Transverse colon (tissue), 4 donors: ENCODE measurements at regions of chr20 and their contacts with region 1.

Region 1: DNA sequence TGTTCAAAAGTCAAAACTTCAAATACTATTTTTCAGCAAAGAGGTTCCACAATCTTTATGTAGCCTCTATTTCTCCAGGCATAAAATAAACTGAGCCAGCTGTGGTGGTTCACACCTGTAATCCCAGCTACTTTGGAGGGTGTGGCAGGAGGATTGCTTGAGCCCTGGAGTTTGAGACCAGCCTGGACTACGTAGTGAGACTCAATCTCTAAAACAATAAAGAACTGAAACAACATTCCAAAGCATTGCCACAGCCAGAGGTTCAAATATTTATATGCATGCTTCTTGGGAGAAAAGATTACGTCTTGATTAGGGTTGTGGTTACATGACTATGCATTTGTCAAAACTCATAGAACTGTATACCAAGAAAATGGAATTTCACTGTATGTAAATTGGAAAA is 27.7 kb upstream of the PAX1 start:
- DNase-seq: no peak
- H3K4me3 ChIP-seq: no peak overlapping the region
- H3K27ac ChIP-seq: no peak overlapping the region
- H3K4me1 ChIP-seq: no peaks in the 10 kb centered on the region
- H3K27me3 ChIP-seq: no peaks in the 10 kb centered on the region
- CTCF ChIP-seq: no peak
- EP300 ChIP-seq: no peak
- POLR2A ChIP-seq: no peak

Region 2: DNA sequence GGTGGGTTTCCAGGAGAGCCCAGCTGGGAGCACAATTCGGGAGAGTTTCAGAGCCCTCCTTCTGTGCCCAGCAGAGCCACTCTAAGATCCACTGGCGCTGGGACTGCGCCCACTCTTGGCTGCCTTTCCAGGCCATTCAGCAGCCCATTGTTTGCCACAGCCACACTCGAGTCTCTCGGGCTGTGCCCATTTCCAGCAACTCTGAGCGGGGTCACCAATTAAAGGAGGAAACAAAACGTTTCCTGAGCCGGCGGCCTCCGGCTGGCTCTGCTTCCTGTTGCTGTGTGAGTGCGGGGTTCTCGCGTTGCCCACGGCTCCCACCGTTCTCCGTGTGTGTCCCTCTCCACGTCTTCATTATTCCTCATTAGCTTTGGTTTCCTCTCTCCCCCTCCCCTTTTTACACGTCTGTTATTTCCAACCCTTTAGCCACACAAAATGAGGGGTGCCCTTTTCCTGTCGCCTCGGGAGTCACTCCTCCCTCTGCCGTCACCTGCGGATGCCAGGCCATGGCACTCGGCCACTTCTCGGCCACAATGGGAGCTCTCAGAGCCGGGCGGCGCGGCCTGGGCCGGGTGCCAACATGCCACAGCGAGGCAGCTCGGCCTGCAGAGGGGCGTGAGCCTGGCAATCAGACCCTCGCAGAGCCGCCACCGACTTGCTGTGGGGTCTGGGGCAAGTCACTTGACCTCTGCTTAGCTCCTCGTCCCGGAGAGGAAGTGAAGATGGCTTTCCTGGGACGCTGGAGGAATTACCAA is 69.6 kb before region 1 on chr20:
- in situ Hi-C with region 1: loop called in 1 of 4 experiments (anchors 10 kb)
- intact Hi-C with region 1: no loop called
- DNase-seq: peak; percentile 38
- H3K4me3 ChIP-seq: no peak overlapping the region
- H3K27ac ChIP-seq: no peak overlapping the region
- H3K4me1 ChIP-seq: no peaks in the 10 kb centered on the region
- H3K27me3 ChIP-seq: no peaks in the 10 kb centered on the region
- CTCF ChIP-seq: no peak
- EP300 ChIP-seq: no peak
- POLR2A ChIP-seq: no peak